ENCODE measurements at regions of chr3 and their contacts with region 1.

Region 1: GRCh38 chr3:16264708-16265454 is at the starts of genes DPH3 and OXNAD1:
- DNase-seq: peak; percentile 99
- ATAC-seq: peak; percentile 96
- H3K4me3 ChIP-seq: peak within 1 kb of the TSS; percentile 80 to 97 (median 90)
- H3K4me3 Mint-ChIP-seq: peak within 1 kb of the TSS; percentile 99
- H3K27ac ChIP-seq: peak within 1 kb of the TSS; percentile 85 to 97
- H3K27ac Mint-ChIP-seq: peak within 1 kb of the TSS; percentile 99
- H3K4me1 ChIP-seq: peaks cover 12 to 13% of the 10 kb centered on the region in 2 donors
- H3K4me1 Mint-ChIP-seq: peaks cover 25% of the 10 kb centered on the region
- H3K27me3 ChIP-seq: no peaks in the 10 kb centered on the region
- H3K27me3 Mint-ChIP-seq: no peaks in the 10 kb centered on the region
- CTCF ChIP-seq: no peak
- total RNA-seq, gene DPH3: 11.5 and 12.9 TPM in 2 replicates
- total RNA-seq, gene OXNAD1: 11.2 and 12.3 TPM in 2 replicates

Region 2: DNA sequence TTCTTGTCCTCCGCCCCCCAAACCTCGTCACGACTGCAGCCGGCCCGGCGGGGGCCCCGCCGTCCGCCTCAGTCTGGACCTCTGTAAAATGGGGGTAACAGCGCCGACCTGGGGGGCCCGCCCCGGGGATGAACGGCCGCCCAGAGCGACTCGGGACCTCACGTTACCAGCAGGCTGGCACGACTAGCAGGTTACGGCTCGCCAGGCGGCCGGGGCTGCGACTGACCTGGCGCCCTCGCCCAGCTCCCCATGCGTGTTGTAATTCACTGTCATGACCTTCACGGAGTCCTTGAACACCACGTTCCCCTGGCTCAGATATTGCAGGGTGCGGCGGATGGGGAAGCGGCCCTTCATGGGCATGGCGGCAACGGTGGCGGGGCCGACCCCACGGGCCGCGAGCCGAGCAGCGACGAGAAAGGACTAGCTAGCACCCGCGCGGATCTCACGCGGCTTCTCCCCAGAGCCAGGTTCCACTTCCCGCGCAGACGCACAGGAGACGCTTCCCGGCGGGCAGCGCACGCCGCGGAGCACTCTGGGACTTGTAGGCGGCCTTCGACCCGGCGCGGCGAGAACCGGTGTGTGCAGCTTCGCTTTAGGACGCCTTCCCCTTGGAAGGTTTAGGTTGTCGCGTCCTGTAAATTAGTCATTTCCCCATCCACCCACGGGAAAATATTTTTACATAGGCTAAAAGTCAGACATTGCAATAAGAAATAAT is 1199.9 kb before region 1 on chr3 and contains the start of gene MRPS25:
- CTCF ChIA-PET with region 1: no interaction called
- POLR2A ChIA-PET with region 1: no interaction called
- intact Hi-C with region 1: no loop called
- DNase-seq: peak; percentile 92
- ATAC-seq: peak; percentile 98
- H3K4me3 ChIP-seq: peak within 1 kb of the TSS; percentile 36 to 93 (median 79)
- H3K4me3 Mint-ChIP-seq: peak within 1 kb of the TSS; percentile 100
- H3K27ac ChIP-seq: peak within 1 kb of the TSS; percentile 66 to 89
- H3K27ac Mint-ChIP-seq: peak within 1 kb of the TSS; percentile 98
- H3K4me1 ChIP-seq: peaks cover 18 to 23% of the 10 kb centered on the region in 2 donors
- H3K4me1 Mint-ChIP-seq: peaks cover 23% of the 10 kb centered on the region
- H3K27me3 ChIP-seq: no peaks in the 10 kb centered on the region
- H3K27me3 Mint-ChIP-seq: no peaks in the 10 kb centered on the region
- CTCF ChIP-seq: no peak
- total RNA-seq, gene MRPS25: 105 and 108 TPM in 2 replicates

Region 3: GRCh38 chr3:15427182-15427880 is 837.5 kb before region 1 on chr3 and contains the starts of genes EAF1 and METTL6:
- CTCF ChIA-PET with region 1: no interaction called
- POLR2A ChIA-PET with region 1: no interaction called
- intact Hi-C with region 1: loop called (anchors 10 kb)
- DNase-seq: peak; percentile 88
- ATAC-seq: peak; percentile 89
- H3K4me3 ChIP-seq: peak within 1 kb of the TSS; percentile 88 to 99 (median 94)
- H3K4me3 Mint-ChIP-seq: peak within 1 kb of the TSS; percentile 95
- H3K27ac ChIP-seq: peak within 1 kb of the TSS; percentile 75 to 85
- H3K27ac Mint-ChIP-seq: peak within 1 kb of the TSS; percentile 92
- H3K4me1 ChIP-seq: peaks cover 19 to 28% of the 10 kb centered on the region in 2 donors
- H3K4me1 Mint-ChIP-seq: peaks cover 45% of the 10 kb centered on the region
- H3K27me3 ChIP-seq: no peaks in the 10 kb centered on the region
- H3K27me3 Mint-ChIP-seq: no peaks in the 10 kb centered on the region
- CTCF ChIP-seq: peak; percentile 56
- total RNA-seq, gene EAF1: 19.8 TPM in 2 replicates
- total RNA-seq, gene METTL6: 23.9 and 27.1 TPM in 2 replicates

Region 4: GRCh38 chr3:15859507-15860013 is 405.3 kb before region 1 on chr3:
- CTCF ChIA-PET with region 1: no interaction called
- POLR2A ChIA-PET with region 1: no interaction called
- intact Hi-C with region 1: loop called (anchors 1 kb)
- DNase-seq: peak; percentile 86
- ATAC-seq: peak; percentile 76
- H3K4me3 ChIP-seq: peak overlapping the region in 4 of 5 experiments; percentile 66 to 87 (median 81)
- H3K4me3 Mint-ChIP-seq: peak overlapping the region; percentile 86
- H3K27ac ChIP-seq: peak overlapping the region; percentile 73 to 87
- H3K27ac Mint-ChIP-seq: peak overlapping the region; percentile 97
- H3K4me1 ChIP-seq: peaks cover 10 to 16% of the 10 kb centered on the region in 2 donors
- H3K4me1 Mint-ChIP-seq: peaks cover 24% of the 10 kb centered on the region
- H3K27me3 ChIP-seq: no peaks in the 10 kb centered on the region
- H3K27me3 Mint-ChIP-seq: no peaks in the 10 kb centered on the region
- CTCF ChIP-seq: no peak

Region 5: DNA sequence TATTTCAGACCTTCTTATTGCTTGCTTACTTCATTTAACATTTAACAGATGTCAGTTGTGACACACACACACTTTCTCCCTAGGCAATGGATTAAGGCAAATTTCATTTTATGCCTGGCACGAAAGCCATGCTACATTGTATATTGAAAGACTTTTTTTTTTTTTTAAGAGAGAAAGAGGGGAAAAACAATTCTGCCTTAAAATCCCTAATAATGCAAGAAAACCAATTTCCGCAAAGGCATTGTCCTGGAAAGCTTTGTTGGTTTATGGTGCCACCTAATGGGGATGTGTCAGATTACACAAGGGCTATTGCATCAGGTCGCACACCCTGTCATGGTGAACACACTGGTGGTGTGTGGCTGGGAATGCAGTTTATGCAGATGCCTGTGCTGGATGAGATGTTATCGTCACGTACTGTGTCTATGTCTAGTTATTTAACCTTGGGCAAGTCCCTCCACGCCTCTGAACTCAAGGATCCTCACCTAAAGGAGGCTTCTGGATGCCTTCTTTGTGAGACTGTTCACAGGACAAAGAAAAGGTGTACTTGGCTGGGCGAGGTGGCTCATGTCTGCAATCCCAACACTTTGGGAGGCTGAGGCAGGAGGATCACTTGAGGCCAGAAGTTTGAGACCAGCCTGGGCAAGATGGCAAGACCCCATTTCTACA is 285.9 kb after region 1 on chr3:
- CTCF ChIA-PET with region 1: interaction called, 76 read pairs
- POLR2A ChIA-PET with region 1: no interaction called
- intact Hi-C with region 1: loop called (anchors 1 kb)
- DNase-seq: peak; percentile 86
- ATAC-seq: peak; percentile 90
- H3K4me3 ChIP-seq: no peak overlapping the region
- H3K4me3 Mint-ChIP-seq: no peak overlapping the region
- H3K27ac ChIP-seq: no peak overlapping the region
- H3K27ac Mint-ChIP-seq: peak overlapping the region; percentile 23
- H3K4me1 ChIP-seq: peaks cover 0 to 3% of the 10 kb centered on the region in 2 donors
- H3K4me1 Mint-ChIP-seq: peaks cover 2% of the 10 kb centered on the region
- H3K27me3 ChIP-seq: no peaks in the 10 kb centered on the region
- H3K27me3 Mint-ChIP-seq: no peaks in the 10 kb centered on the region
- CTCF ChIP-seq: peak; percentile 90

Region 6: DNA sequence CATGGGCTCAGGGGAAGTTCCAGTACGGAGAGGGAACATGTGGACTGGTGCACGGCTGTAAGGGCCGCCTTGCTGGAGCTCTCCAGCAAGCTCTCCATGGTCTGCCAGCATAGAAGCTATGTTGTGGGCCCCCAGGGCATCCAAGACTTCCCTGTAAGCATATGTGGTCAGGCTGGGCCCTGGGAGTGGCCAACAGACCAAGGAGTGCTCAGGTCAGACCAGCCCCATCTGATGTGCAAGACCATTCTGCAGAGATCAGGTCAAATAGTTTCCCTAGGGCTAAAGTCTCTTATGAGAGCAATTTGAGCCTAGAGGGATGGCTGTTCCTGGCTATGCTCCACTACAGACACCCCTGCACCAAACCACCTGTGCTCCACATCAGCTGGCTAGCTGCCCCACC is 450.4 kb after region 1 on chr3:
- CTCF ChIA-PET with region 1: no interaction called
- POLR2A ChIA-PET with region 1: no interaction called
- intact Hi-C with region 1: no loop called
- DNase-seq: no peak
- ATAC-seq: no peak
- H3K4me3 ChIP-seq: no peak overlapping the region
- H3K4me3 Mint-ChIP-seq: no peak overlapping the region
- H3K27ac ChIP-seq: no peak overlapping the region
- H3K27ac Mint-ChIP-seq: no peak overlapping the region
- H3K4me1 ChIP-seq: no peaks in the 10 kb centered on the region
- H3K4me1 Mint-ChIP-seq: peaks cover 1% of the 10 kb centered on the region
- H3K27me3 ChIP-seq: peaks cover 0 to 6% (median 0%) of the 10 kb centered on the region in 4 experiments
- H3K27me3 Mint-ChIP-seq: peaks cover 28% of the 10 kb centered on the region
- CTCF ChIP-seq: no peak

Region 7: DNA sequence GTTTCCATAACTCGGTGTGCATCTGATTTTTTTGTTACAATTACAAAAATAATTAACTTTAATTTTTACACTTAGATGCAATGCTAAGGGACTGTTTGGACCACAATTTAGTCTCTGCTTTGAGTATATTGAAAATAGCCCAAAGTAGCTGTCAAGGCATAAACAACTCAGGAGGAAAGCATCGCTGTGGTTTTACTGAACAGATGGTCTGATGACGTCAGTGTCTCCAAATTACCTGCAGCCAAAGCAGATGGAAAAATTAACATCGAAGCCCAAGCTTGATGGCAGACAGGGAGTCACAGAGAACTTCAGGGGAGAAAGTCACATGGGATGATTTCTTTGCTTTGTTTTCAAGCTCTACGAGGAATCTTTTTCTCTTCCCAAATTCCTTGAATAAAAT is 536.8 kb after region 1 on chr3:
- CTCF ChIA-PET with region 1: no interaction called
- POLR2A ChIA-PET with region 1: no interaction called
- intact Hi-C with region 1: no loop called
- DNase-seq: peak; percentile 55
- ATAC-seq: peak; percentile 52
- H3K4me3 ChIP-seq: no peak overlapping the region
- H3K4me3 Mint-ChIP-seq: peak overlapping the region; percentile 75
- H3K27ac ChIP-seq: peak overlapping the region in 1 of 2 donors; percentile 3
- H3K27ac Mint-ChIP-seq: peak overlapping the region; percentile 92
- H3K4me1 ChIP-seq: peaks cover 42 to 47% of the 10 kb centered on the region in 2 donors
- H3K4me1 Mint-ChIP-seq: peaks cover 46% of the 10 kb centered on the region
- H3K27me3 ChIP-seq: no peaks in the 10 kb centered on the region
- H3K27me3 Mint-ChIP-seq: no peaks in the 10 kb centered on the region
- CTCF ChIP-seq: no peak

Region 8: DNA sequence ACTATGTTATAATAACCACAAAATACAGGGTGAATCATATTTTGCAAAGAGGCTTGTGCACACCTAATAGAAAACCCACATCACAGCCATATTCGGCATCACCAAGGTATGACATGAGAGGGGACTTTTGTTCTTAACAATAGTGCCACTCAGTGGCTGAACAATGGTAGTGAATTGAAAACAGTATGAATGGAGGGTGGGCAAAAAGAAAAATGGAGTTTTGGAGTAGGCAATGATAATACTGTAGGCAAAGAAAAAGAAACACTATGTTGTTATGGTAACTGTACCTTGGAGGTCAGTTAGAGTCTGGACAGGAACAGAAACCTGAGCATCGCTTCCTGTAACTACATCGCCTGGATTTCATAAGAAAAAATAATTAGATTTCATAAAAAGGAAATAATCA is 968.5 kb after region 1 on chr3:
- CTCF ChIA-PET with region 1: interaction called, 6 read pairs
- POLR2A ChIA-PET with region 1: interaction called, 4 read pairs
- intact Hi-C with region 1: loop called (anchors 5 kb)
- DNase-seq: peak; percentile 71
- ATAC-seq: peak; percentile 97
- H3K4me3 ChIP-seq: no peak overlapping the region
- H3K4me3 Mint-ChIP-seq: no peak overlapping the region
- H3K27ac ChIP-seq: no peak overlapping the region
- H3K27ac Mint-ChIP-seq: no peak overlapping the region
- H3K4me1 ChIP-seq: peaks cover 4 to 13% of the 10 kb centered on the region in 2 donors
- H3K4me1 Mint-ChIP-seq: peaks cover 20% of the 10 kb centered on the region
- H3K27me3 ChIP-seq: no peaks in the 10 kb centered on the region
- H3K27me3 Mint-ChIP-seq: no peaks in the 10 kb centered on the region
- CTCF ChIP-seq: peak; percentile 86

Measured in B cell (primary cell).